Activated CD8-positive, alpha-beta T cell treated with anti-CD3 and anti-CD28 coated beads, Interleukin-2, amount 10 ng/mL, durations not matched to agents 7 days and 5 days (primary cell): ENCODE measurements at regions of chr4 and their contacts with region 1.

Region 1: DNA sequence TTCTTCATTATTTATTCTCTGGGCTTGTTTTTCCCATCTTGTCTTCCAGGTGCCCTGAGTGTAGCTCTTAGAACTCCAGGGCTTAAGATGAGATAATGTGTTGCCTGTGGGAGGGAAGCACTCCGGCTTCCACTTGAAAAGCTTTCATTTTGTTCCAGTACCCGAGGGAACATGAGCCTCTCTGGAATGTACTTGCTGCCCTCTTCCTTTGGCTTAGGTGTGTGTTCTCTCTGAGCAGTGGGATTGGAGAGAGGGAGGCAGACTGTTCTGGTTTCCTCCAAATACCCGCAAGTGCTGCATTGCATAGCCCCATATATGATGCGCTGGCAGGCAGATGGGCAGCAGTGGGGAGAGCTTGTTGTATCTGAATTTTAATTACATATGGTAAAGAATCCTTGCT is 861 bp upstream of the DTHD1 start:
- DNase-seq: no peak
- ATAC-seq: peak; percentile 26
- H3K4me3 Mint-ChIP-seq: no peak overlapping the region
- H3K27ac Mint-ChIP-seq: no peak overlapping the region
- H3K4me1 Mint-ChIP-seq: peaks cover 54% of the 10 kb centered on the region
- H3K27me3 Mint-ChIP-seq: no peaks in the 10 kb centered on the region

Region 2: GRCh38 chr4:36198068-36198808 is 82.3 kb before region 1 on chr4:
- CTCF ChIA-PET with region 1: no interaction called
- POLR2A ChIA-PET with region 1: no interaction called
- DNase-seq: no peak
- ATAC-seq: peak; percentile 27
- H3K4me3 Mint-ChIP-seq: no peak overlapping the region
- H3K27ac Mint-ChIP-seq: no peak overlapping the region
- H3K4me1 Mint-ChIP-seq: peaks cover 22% of the 10 kb centered on the region
- H3K27me3 Mint-ChIP-seq: no peaks in the 10 kb centered on the region

Region 3: GRCh38 chr4:36269101-36269500 is 11.5 kb before region 1 on chr4:
- CTCF ChIA-PET with region 1: interaction called, 10 read pairs
- POLR2A ChIA-PET with region 1: interaction called, 3 read pairs
- DNase-seq: peak; percentile 63
- ATAC-seq: peak; percentile 95
- H3K4me3 Mint-ChIP-seq: no peak overlapping the region
- H3K27ac Mint-ChIP-seq: peak overlapping the region; percentile 41
- H3K4me1 Mint-ChIP-seq: peaks cover 40% of the 10 kb centered on the region
- H3K27me3 Mint-ChIP-seq: no peaks in the 10 kb centered on the region